HCT116 (cell line): ENCODE measurements at regions of chr13 and their contacts with region 1.

Region 1: DNA sequence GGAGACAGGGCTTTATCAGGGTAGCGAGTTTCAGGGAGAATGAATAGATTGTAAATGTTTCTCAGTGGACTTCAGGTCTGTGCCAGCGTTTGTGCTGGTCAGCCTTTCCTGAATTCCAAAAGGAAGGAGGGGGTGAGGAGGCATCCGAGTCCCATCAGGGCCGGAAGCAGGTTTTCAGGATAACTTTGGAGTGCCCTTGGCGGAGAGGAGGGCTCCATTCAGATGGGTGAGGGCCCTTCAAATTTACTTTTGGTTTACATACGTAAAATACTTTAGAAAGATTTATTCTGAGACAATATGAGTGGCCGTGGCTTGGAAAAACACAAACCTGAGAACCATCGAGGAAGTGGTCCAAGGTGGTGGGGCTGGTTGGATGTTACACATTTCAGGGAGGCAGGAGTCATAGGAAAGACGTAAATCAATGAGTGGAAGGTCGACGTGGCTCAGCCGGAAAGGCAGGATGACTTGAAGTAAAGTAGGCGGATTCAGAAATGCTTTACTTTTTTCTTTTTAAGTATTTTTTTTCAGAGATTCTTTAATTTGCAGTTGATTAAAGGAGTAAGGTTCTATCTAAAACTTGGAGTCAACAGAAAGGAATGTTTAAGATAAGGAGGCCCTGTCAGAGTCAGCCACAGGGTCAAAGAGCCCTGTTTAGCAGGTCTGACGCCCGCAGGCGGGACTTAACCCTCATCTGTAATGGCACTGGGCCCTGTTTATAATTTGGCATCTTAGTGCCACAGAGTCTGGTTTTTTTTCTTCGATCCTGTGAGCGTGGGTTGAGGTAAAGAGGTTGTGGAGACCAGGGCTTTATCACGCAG is 32.8 kb downstream of the ATP11A start:
- DNase-seq: peak; percentile 86
- ATAC-seq: peak; percentile 75
- H3K4me3 ChIP-seq: peak overlapping the region; percentile 3 to 36
- H3K27ac ChIP-seq: peak overlapping the region; percentile 95
- H3K4me1 ChIP-seq: peaks cover 67 to 80% of the 10 kb centered on the region in 2 experiments
- H3K27me3 ChIP-seq: no peaks in the 10 kb centered on the region
- CTCF ChIP-seq: no peak
- POLR2A ChIP-seq: no peak
- RAD21 ChIP-seq: no peak

Region 2: GRCh38 chr13:112711528-112712265 is 10.9 kb before region 1 on chr13:
- CTCF ChIA-PET with region 1: no interaction called
- POLR2A ChIA-PET with region 1: no interaction called
- RAD21 ChIA-PET with region 1: no interaction called
- intact Hi-C with region 1: loop called (anchors 1 kb)
- DNase-seq: peak; percentile 85
- ATAC-seq: peak; percentile 97
- H3K4me3 ChIP-seq: peak overlapping the region; percentile 31 to 49
- H3K27ac ChIP-seq: peak overlapping the region; percentile 87
- H3K4me1 ChIP-seq: peaks cover 51 to 55% of the 10 kb centered on the region in 2 experiments
- H3K27me3 ChIP-seq: no peaks in the 10 kb centered on the region
- CTCF ChIP-seq: peak in 1 of 3 experiments; percentile 31; a peak in 2 of 6 replicates
- POLR2A ChIP-seq: no peak
- RAD21 ChIP-seq: no peak

Region 3: GRCh38 chr13:112859817-112860190 is 137.2 kb after region 1 on chr13:
- CTCF ChIA-PET with region 1: no interaction called
- POLR2A ChIA-PET with region 1: no interaction called
- RAD21 ChIA-PET with region 1: no interaction called
- intact Hi-C with region 1: no loop called
- DNase-seq: no peak
- ATAC-seq: no peak
- H3K4me3 ChIP-seq: no peak overlapping the region
- H3K27ac ChIP-seq: no peak overlapping the region
- H3K4me1 ChIP-seq: no peaks in the 10 kb centered on the region
- H3K27me3 ChIP-seq: no peaks in the 10 kb centered on the region
- CTCF ChIP-seq: no peak
- POLR2A ChIP-seq: no peak
- RAD21 ChIP-seq: no peak